Colonic mucosa (tissue), 4 donors: ENCODE measurements at regions of chr18 and their contacts with region 1.

Region 1: GRCh38 chr18:50218432-50219197 is 23.7 kb upstream of the MYO5B start:
- DNase-seq: peak; percentile 50
- H3K4me3 ChIP-seq: no peak overlapping the region
- H3K27ac ChIP-seq: no peak overlapping the region
- H3K4me1 ChIP-seq: no peaks in the 10 kb centered on the region
- H3K27me3 ChIP-seq: no peaks in the 10 kb centered on the region
- CTCF ChIP-seq: peak; percentile 25

Region 2: DNA sequence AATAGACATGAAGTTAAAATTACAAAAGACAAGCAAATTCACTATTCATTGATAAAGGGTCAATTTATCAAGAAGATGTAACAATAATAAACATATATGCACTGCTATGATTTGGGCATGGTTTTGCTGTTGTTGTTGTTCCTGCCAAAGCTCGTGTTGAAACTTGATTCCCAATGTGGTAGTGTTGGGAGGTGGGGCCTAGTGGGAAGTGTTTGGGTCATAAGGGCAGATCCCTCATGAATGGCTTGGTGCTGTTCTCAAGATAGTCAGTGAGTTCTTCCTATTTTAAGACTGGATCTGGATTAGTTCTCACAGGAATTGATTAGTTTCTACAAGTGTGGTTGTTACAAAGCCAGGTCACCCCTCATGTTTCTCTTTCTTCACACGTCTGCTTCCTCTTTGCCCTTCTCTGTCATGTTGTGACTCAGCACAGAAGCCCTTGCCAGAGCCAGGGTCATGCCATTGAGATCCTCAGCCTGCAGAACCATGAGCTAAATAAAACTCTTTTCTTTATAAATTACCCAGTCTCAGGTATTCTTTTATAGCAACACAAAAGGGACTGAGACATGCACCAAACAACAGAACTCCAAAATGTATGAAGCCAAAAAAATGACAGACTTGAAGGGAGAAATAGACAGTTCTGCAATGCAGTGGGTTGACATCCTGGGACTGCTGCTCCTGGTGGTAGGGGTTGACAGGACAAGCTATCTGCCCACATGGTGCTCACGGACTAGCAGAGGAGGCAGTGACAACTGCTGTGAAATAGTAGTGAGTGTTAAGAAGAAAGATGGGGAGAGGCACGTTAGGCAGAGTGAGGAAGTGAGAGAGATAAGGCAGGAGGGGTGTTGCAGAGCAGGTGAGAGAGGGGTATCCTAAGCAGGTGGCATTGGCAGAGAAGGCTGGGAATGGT is 137.7 kb after region 1 on chr18:
- intact Hi-C with region 1: loop called (anchors 5 kb)
- DNase-seq: no peak
- H3K4me3 ChIP-seq: no peak overlapping the region
- H3K27ac ChIP-seq: no peak overlapping the region
- H3K4me1 ChIP-seq: no peaks in the 10 kb centered on the region
- H3K27me3 ChIP-seq: no peaks in the 10 kb centered on the region
- CTCF ChIP-seq: no peak

Region 3: DNA sequence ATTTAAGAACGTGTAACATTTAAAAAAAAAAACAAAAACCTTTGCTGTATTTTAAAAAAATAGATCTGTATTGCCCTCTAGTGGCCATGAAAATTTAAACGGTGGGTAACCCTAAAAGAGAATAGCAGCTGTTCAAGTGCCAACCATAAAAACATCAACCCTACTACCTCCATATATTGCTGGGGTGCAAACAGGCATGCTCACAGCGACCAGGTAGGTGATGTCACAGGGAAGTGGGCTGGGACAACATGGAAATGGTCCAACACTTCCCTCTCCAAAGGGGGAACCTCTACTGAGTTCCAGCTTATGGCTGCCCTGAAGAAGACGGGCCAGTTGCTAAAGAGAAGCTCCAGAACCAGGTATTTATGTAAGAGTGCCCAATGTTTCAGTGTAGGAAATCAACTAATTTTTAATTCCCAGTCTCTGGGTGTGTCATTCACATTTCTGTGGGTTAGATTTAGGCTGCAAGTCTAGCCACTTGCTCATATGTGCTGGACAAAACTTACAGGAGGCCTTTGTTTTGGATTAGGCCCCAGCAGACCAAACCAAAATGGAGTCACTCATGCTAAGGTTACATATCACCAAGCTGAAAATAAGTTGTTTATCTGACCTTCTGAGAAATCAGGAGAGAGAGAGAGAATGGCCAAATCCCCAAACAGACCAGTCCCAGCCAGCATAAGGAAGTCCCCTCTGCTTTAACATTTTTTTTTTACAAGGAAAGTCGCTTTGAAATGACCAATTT is 210.8 kb after region 1 on chr18:
- intact Hi-C with region 1: loop called (anchors 5 kb)
- DNase-seq: no peak
- H3K4me3 ChIP-seq: no peak overlapping the region
- H3K27ac ChIP-seq: no peak overlapping the region
- H3K4me1 ChIP-seq: no peaks in the 10 kb centered on the region
- H3K27me3 ChIP-seq: no peaks in the 10 kb centered on the region
- CTCF ChIP-seq: peak; percentile 48